WTC11 (cell line): ENCODE measurements at regions of chr6 and their contacts with region 1.

Region 1: GRCh38 chr6:10747251-10747972 is at the start of gene TMEM14B:
- DNase-seq: peak; percentile 100
- ATAC-seq: peak; percentile 98
- H3K4me3 Mint-ChIP-seq: peak within 1 kb of the TSS; percentile 93
- H3K27ac Mint-ChIP-seq: peak within 1 kb of the TSS; percentile 94
- H3K4me1 Mint-ChIP-seq: peaks cover 41% of the 10 kb centered on the region
- H3K27me3 Mint-ChIP-seq: no peaks in the 10 kb centered on the region
- CTCF ChIP-seq: no peak
- total RNA-seq, gene TMEM14B: 72.7 to 82.9 TPM (median 78.0 TPM) in 3 replicates

Region 2: GRCh38 chr6:10722820-10723566 is 24.4 kb before region 1 on chr6 and contains the start of gene TMEM14C:
- CTCF ChIA-PET with region 1: interaction called, 11 read pairs
- POLR2A ChIA-PET with region 1: interaction called, 43 read pairs
- DNase-seq: peak; percentile 100
- ATAC-seq: peak; percentile 97
- H3K4me3 Mint-ChIP-seq: peak within 1 kb of the TSS; percentile 97
- H3K27ac Mint-ChIP-seq: peak within 1 kb of the TSS; percentile 99
- H3K4me1 Mint-ChIP-seq: peaks cover 28% of the 10 kb centered on the region
- H3K27me3 Mint-ChIP-seq: no peaks in the 10 kb centered on the region
- CTCF ChIP-seq: no peak
- total RNA-seq, gene TMEM14C: 103 to 122 TPM (median 119 TPM) in 3 replicates

Region 3: GRCh38 chr6:10769419-10769818 is 22.0 kb after region 1 on chr6:
- CTCF ChIA-PET with region 1: no interaction called
- POLR2A ChIA-PET with region 1: no interaction called
- DNase-seq: no peak
- ATAC-seq: no peak
- H3K4me3 Mint-ChIP-seq: no peak overlapping the region
- H3K27ac Mint-ChIP-seq: no peak overlapping the region
- H3K4me1 Mint-ChIP-seq: no peaks in the 10 kb centered on the region
- H3K27me3 Mint-ChIP-seq: no peaks in the 10 kb centered on the region
- CTCF ChIP-seq: no peak